Dorsolateral prefrontal cortex (tissue), 120 donors: ENCODE measurements at regions of chr12 and their contacts with region 1.

Region 1: DNA sequence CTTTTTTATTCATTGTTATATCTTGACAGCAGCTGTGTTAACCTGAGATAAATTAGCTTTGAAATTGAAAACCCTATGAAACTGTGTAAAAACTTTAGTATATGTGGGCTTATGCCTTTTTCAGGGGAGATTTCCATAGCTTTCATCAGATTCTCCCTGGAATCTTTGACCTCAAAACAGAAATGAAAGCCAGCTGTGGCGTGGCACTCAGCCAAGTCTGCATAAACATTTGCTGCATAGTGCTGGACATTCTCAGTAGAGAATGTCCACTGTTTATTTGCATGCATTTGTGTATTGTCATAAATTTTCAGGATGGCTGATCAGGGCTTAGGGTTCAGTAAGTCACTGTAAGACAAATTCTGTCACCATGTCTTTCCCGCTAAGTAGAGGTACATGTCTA is 115.3 kb upstream of the NAP1L1 start:
- DNase-seq: no peak
- H3K4me3 ChIP-seq: no peak overlapping the region
- H3K27ac ChIP-seq: no peak overlapping the region
- H3K27me3 ChIP-seq: no peaks in the 10 kb centered on the region
- CTCF ChIP-seq: no peak

Region 2: GRCh38 chr12:76259660-76260389 is 60.0 kb after region 1 on chr12:
- intact Hi-C with region 1: loop called in 1 of 2 experiments (anchors 10 kb)
- DNase-seq: no peak
- H3K4me3 ChIP-seq: no peak overlapping the region
- H3K27ac ChIP-seq: peak overlapping the region in 6 of 59 donors; percentile 25 to 54 (median 44)
- H3K27me3 ChIP-seq: no peaks in the 10 kb centered on the region
- CTCF ChIP-seq: no peak

Region 3: GRCh38 chr12:76299536-76300296 is 99.9 kb after region 1 on chr12:
- intact Hi-C with region 1: no loop called
- DNase-seq: no peak
- H3K4me3 ChIP-seq: no peak overlapping the region
- H3K27ac ChIP-seq: no peak overlapping the region
- H3K27me3 ChIP-seq: no peaks in the 10 kb centered on the region
- CTCF ChIP-seq: no peak